BJ (cell line): ENCODE measurements at regions of chr3 and their contacts with region 1.

Region 1: GRCh38 chr3:197599089-197599765 is 43.5 kb upstream of the BDH1 start:
- DNase-seq: peak; percentile 19
- H3K4me3 ChIP-seq: peak overlapping the region; percentile 30
- H3K27me3 ChIP-seq: no peaks in the 10 kb centered on the region
- CTCF ChIP-seq: peak; percentile 95

Region 2: DNA sequence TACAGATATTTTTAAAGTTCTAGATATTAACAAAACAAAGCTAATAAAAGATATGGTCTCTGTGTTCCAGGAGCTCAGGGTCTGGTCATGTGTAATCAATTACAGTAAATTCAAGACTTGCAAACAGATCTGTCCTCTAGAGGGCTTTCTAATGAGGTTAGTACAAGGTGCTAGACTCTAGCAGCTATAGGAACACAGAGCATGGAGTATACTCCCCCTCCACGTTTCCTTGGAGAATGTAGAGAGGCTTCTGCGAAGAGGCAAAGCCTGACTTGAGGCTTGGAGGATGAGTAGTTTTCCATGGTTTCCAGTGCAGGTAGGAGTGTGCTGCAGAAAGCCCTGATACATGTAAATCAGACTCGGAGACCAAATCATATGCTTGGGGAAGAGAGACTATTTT is 268.1 kb before region 1 on chr3:
- CTCF ChIA-PET with region 1: no interaction called
- POLR2A ChIA-PET with region 1: no interaction called
- DNase-seq: no peak
- H3K4me3 ChIP-seq: no peak overlapping the region
- H3K27me3 ChIP-seq: no peaks in the 10 kb centered on the region
- CTCF ChIP-seq: peak; percentile 30

Region 3: GRCh38 chr3:197577366-197578074 is 21.7 kb before region 1 on chr3:
- CTCF ChIA-PET with region 1: interaction called, 11 read pairs
- POLR2A ChIA-PET with region 1: no interaction called
- DNase-seq: no peak
- H3K4me3 ChIP-seq: no peak overlapping the region
- H3K27me3 ChIP-seq: peaks cover 6% of the 10 kb centered on the region
- CTCF ChIP-seq: no peak

Region 4: GRCh38 chr3:197613199-197613598 is 14.0 kb after region 1 on chr3:
- CTCF ChIA-PET with region 1: interaction called, 34 read pairs
- POLR2A ChIA-PET with region 1: no interaction called
- DNase-seq: no peak
- H3K4me3 ChIP-seq: no peak overlapping the region
- H3K27me3 ChIP-seq: no peaks in the 10 kb centered on the region
- CTCF ChIP-seq: no peak